Mammary epithelial cell (primary cell): ENCODE measurements at regions of chr22 and their contacts with region 1.

Region 1: GRCh38 chr22:37260901-37261336 is 16.9 kb upstream of the RAC2 start:
- DNase-seq: peak; percentile 35
- H3K4me3 ChIP-seq: no peak overlapping the region
- H3K27ac ChIP-seq: no peak overlapping the region
- H3K4me1 ChIP-seq: peaks cover 23% of the 10 kb centered on the region
- H3K27me3 ChIP-seq: no peaks in the 10 kb centered on the region
- CTCF ChIP-seq: peak; percentile 91 to 95

Region 2: DNA sequence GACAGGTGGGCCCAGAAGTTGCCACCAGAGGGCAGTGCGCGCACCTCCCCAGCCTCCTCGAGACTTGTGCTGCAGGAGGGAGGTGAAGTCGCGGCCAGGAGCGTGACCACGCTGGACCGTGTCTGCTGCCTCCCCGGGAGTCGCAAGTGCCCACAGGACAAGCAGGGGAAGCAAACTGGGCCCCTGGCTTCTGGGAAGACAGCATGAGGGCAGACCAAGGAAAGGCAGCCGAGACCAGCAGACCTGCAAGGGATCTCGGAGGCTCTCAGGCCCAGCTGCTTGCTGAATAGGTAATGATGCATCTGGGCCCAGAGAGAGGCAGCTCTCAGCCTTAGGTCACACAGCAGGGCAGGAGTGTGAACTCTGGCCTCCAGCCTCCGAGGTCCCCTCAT is 94.2 kb before region 1 on chr22:
- CTCF ChIA-PET with region 1: no interaction called
- dilution Hi-C with region 1: no loop called
- in situ Hi-C with region 1: no loop called
- intact Hi-C with region 1: loop called (anchors 1 kb)
- DNase-seq: peak; percentile 53
- H3K4me3 ChIP-seq: no peak overlapping the region
- H3K27ac ChIP-seq: no peak overlapping the region
- H3K4me1 ChIP-seq: peaks cover 2% of the 10 kb centered on the region
- H3K27me3 ChIP-seq: no peaks in the 10 kb centered on the region
- CTCF ChIP-seq: peak; percentile 87 to 94

Region 3: DNA sequence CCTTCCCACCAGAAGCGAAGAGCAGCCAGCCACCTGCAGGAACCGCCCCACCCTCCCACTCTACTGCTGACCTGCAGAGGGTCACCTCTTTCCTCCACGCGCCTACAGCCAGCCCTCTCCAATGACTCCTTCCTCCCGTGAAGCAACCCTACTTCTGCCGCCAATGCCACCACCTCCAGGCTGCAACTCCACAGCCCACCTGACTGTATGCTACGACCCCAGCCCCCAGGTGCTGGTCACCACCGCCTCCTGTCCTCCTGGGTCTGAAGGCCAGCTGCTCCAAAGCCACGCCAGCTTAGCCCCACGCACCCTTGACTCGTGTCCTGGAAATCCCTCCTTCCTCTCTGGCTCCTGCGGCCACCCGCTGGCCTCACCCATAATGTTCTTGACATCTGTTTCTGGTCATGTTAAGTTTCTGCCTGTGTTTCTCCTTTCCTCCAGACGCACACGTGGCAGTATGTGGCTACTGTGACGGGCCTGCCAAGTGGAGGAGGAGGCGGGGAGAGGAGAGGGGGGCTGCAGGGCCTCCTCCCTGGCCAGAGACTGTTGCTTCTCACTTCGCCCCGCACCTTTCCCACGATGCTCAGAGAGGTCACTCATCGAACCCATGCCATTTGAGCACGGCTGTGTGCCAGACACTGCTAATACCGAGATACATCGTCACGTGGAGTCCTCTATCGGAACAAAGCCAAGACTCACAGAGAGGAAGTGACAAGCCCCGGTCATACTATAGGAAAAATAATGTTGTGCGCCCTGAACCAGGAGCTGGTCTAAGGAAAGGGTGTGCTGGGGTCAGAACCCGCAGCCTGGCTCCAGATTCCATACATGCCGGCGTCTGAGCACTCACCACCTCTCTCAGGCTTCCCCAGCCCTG is 84.5 kb before region 1 on chr22:
- CTCF ChIA-PET with region 1: no interaction called
- dilution Hi-C with region 1: loop called (anchors 5 kb)
- in situ Hi-C with region 1: no loop called
- intact Hi-C with region 1: no loop called
- DNase-seq: no peak
- H3K4me3 ChIP-seq: no peak overlapping the region
- H3K27ac ChIP-seq: no peak overlapping the region
- H3K4me1 ChIP-seq: peaks cover 7% of the 10 kb centered on the region
- H3K27me3 ChIP-seq: peaks cover 8% of the 10 kb centered on the region
- CTCF ChIP-seq: no peak

Region 4: GRCh38 chr22:37212167-37212906 is 48.6 kb before region 1 on chr22 and contains the start of gene SSTR3:
- CTCF ChIA-PET with region 1: no interaction called
- dilution Hi-C with region 1: loop called (anchors 5 kb)
- in situ Hi-C with region 1: no loop called
- intact Hi-C with region 1: no loop called
- DNase-seq: no peak
- H3K4me3 ChIP-seq: no peak within 1 kb of the TSS
- H3K27ac ChIP-seq: no peak within 1 kb of the TSS
- H3K4me1 ChIP-seq: peaks cover 3% of the 10 kb centered on the region
- H3K27me3 ChIP-seq: no peaks in the 10 kb centered on the region
- CTCF ChIP-seq: no peak
- total RNA-seq, gene SSTR3: not detected

Region 5: DNA sequence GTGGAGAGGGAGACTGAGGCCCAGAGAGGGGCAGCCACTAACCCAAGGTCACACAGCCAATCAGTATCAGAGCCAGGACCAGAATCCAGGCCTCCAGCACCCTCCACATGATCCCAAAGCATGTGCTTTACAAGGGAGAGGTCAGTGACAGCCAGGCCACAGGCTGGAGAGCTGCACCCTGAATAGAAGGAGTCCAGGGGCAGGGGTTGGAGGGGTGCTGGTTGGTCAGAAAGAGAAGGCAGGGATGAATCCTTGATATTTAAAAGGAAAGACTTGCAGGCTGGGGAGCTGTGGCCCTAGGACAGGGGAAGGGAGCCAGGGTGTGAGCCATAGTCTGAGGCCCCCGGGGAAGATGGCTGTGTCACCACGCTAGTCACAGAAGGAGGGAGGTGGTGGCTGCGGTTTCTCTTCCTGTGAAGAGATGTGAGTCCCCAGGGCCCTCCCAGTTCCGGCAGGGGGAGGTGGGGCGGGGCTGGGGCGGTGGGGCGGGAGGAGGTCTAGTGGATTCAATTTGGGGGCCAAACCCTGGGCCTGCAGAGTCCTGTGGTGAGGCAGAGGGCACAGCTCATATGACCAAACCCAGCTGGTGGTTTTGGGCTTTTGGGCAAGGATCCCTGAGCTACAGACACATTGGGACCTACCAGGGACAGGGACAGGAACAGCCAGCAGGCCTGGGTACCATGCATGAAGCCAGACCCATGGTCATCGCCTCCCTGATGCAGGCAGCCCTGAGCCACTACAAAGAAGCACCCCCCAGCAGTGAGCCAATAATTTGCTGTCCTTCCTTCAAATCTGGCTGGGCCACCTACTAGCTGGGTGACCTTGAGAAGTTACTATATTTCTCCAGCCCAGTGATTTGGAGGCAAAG is 30.9 kb before region 1 on chr22:
- CTCF ChIA-PET with region 1: interaction called, 10 read pairs
- dilution Hi-C with region 1: no loop called
- in situ Hi-C with region 1: no loop called
- intact Hi-C with region 1: loop called (anchors 1 kb)
- DNase-seq: peak; percentile 55
- H3K4me3 ChIP-seq: no peak overlapping the region
- H3K27ac ChIP-seq: peak overlapping the region; percentile 53
- H3K4me1 ChIP-seq: peaks cover 44% of the 10 kb centered on the region
- H3K27me3 ChIP-seq: no peaks in the 10 kb centered on the region
- CTCF ChIP-seq: no peak

Region 6: GRCh38 chr22:37244922-37245722 is 15.8 kb before region 1 on chr22:
- CTCF ChIA-PET with region 1: no interaction called
- dilution Hi-C with region 1: no loop called
- in situ Hi-C with region 1: no loop called
- intact Hi-C with region 1: no loop called
- DNase-seq: no peak
- H3K4me3 ChIP-seq: no peak overlapping the region
- H3K27ac ChIP-seq: no peak overlapping the region
- H3K4me1 ChIP-seq: peaks cover 36% of the 10 kb centered on the region
- H3K27me3 ChIP-seq: no peaks in the 10 kb centered on the region
- CTCF ChIP-seq: no peak